PC-3 (cell line): ENCODE measurements at regions of chr14 and their contacts with region 1.

Region 1: DNA sequence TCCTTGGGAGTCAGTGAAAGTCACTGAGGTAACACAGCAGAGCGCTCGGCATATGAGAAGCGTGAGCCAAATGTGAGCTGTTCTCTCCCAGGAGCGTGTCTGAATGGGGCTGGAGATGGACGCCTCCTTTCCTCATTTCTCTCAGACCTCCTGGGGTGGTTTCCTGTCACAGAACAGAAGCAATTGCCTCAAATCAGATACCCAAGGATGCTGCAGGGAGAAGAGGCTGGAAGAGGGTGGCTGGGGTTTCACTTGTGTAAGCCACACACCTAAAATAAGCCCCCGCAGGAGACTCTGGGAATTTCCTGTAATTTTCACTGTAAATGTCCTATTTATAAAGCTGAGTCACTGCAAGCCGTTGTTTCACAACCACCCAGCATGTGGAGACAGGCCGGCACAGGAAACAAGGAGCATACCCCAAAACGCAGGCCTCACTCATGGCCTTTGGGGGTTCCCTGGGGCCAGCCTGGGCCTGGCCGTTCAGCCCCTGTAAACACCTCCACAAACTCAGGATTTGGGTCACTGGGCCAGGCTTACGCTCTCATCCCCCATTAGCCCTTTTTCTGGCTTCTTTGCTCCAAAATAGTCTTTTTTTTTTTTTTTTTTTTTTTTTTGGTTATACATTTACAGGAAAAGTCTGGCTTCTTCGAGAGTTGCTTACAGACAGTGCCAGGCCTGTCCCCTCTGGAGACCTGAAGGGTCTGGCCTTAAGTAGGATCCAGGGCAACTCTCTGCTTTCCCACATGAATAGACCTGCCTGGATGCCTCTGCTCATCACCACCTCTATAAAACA is 55.3 kb downstream of the VCPKMT start:
- DNase-seq: peak; percentile 88
- ATAC-seq: peak; percentile 66
- H3K4me3 ChIP-seq: no peak overlapping the region
- H3K27ac ChIP-seq: peak overlapping the region; percentile 96
- H3K4me1 ChIP-seq: peaks cover 38% of the 10 kb centered on the region
- H3K27me3 ChIP-seq: no peaks in the 10 kb centered on the region
- CTCF ChIP-seq: peak; percentile 33; the same call in 1 of the 2 replicates

Region 2: DNA sequence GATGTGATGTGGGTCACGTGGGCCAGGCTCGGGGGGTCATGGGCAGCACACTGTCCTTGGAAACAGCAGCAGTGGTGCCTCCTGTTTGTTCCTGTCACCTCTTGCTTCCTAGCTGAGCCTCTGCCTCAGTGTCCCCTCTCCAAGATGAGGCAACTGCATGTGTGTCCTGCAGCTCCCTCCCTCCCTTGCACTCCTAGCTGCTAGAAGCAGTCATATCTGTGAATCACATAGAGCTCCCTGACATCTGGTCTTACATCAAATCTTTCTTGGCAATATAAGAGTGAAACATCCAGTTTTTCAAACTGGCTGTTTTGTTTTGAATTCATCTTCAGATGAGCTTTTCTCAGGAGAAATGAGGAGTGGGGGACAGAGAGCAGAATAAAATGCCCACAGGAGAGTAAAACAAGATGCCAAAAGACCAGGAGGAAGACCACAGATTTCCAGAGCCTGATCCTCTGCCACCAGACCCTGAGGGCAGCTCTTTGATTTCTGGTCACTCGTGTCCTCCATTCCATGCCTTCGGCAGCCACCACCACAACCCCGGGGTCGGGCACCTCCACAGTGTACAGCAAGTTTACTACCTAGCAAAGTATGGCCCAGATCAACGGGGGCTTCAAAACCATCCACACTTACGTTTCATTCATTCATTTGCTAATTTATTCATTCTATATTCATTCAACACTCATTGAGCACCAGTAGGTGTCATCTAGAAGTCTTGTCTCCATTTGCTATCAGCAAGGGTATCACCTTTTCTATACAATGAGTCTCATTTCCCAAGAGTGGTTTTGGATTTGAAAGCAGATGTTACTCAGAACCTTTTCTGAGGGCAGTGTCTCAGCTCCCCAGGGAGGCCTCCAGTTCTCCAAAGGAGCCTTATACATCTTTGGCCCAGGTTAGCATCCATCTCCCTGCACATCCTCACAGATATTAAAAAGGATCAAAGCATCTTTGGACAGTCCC is 48.2 kb before region 1 on chr14:
- CTCF ChIA-PET with region 1: no interaction called
- POLR2A ChIA-PET with region 1: no interaction called
- intact Hi-C with region 1: no loop called
- DNase-seq: peak; percentile 33
- ATAC-seq: no peak
- H3K4me3 ChIP-seq: no peak overlapping the region
- H3K27ac ChIP-seq: peak overlapping the region; percentile 96
- H3K4me1 ChIP-seq: peaks cover 45% of the 10 kb centered on the region
- H3K27me3 ChIP-seq: no peaks in the 10 kb centered on the region
- CTCF ChIP-seq: no peak

Region 3: GRCh38 chr14:50099335-50099734 is 38.3 kb after region 1 on chr14:
- CTCF ChIA-PET with region 1: no interaction called
- POLR2A ChIA-PET with region 1: no interaction called
- intact Hi-C with region 1: loop called (anchors 5 kb)
- DNase-seq: peak; percentile 93
- ATAC-seq: peak; percentile 99
- H3K4me3 ChIP-seq: no peak overlapping the region
- H3K27ac ChIP-seq: peak overlapping the region; percentile 66
- H3K4me1 ChIP-seq: peaks cover 38% of the 10 kb centered on the region
- H3K27me3 ChIP-seq: no peaks in the 10 kb centered on the region
- CTCF ChIP-seq: no peak

Region 4: GRCh38 chr14:50225067-50225973 is 164.3 kb after region 1 on chr14:
- CTCF ChIA-PET with region 1: no interaction called
- POLR2A ChIA-PET with region 1: no interaction called
- intact Hi-C with region 1: no loop called
- DNase-seq: peak; percentile 87
- ATAC-seq: peak; percentile 83
- H3K4me3 ChIP-seq: no peak overlapping the region
- H3K27ac ChIP-seq: no peak overlapping the region
- H3K4me1 ChIP-seq: peaks cover 21% of the 10 kb centered on the region
- H3K27me3 ChIP-seq: no peaks in the 10 kb centered on the region
- CTCF ChIP-seq: no peak